Mammary epithelial cell (primary cell): ENCODE measurements at regions of chr2 and their contacts with region 1.

Region 1: DNA sequence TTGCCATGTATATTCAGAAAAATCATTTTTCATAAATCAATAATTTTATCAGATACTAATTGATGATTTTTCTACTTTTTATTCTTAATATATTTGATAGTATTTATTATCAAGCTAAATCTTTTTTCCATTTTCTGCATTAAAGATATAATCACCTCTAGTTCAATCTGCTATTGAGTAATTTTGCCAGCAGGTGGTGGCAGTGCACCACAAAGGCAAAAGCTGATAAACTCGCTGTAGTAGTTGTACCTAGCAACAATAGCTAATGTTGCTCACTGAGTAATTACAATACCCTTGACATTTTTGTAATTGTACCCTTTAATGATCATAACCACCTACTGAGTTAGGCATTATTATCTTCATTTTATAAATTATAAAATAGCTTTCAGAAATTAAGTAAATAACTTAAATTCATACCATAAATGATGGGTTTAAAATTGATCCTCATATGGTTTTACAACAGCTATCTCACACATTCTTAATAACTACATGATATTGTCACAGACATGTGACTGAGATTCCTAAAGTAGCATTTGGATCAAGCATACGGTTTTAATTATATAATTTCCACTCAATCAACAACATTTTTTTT is 52.0 kb upstream of the CALCRL start:
- DNase-seq: peak; percentile 28
- H3K4me3 ChIP-seq: no peak overlapping the region
- H3K27ac ChIP-seq: no peak overlapping the region
- H3K4me1 ChIP-seq: no peaks in the 10 kb centered on the region
- H3K27me3 ChIP-seq: no peaks in the 10 kb centered on the region
- CTCF ChIP-seq: peak; percentile 74 to 82

Region 2: DNA sequence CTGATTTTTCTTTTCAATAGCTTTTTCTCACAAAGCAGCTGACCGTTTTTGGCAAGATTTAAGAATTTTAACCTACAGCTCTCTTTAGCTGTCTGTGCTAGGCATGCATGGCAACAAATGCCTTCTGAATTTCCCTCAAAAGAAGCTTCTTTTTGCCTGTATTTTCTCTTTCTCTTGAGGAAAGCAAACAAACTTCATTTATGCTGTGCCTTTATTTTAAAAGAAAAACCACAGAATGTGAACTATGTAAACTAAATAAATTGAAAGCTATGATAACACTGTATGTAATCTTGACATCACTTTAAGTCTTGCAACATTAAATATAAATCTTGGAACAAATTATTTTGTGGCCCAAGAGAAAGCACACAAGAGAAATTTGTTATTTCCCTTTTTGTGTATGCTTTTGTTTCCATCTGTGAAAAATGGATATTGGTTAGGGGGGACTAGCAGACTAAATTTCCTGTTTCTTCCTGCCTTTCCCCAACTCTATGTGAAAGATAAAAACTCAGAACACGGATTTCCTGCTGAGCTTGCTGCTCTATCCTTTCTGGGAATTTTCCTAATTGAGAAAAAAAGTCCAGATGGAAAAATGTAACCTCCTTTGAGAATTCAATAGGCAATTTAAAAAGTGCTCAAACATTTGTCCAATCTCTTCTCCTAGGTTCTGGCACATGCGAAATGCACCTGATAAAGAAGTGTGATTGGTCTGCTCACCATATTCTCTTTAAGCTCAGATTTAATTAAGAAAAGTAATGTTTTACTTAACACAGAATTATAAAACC is 75.1 kb after region 1 on chr2:
- CTCF ChIA-PET with region 1: interaction called, 3 read pairs
- dilution Hi-C with region 1: no loop called
- in situ Hi-C with region 1: loop called (anchors 5 kb)
- intact Hi-C with region 1: loop called (anchors 1 kb)
- DNase-seq: no peak
- H3K4me3 ChIP-seq: no peak overlapping the region
- H3K27ac ChIP-seq: no peak overlapping the region
- H3K4me1 ChIP-seq: no peaks in the 10 kb centered on the region
- H3K27me3 ChIP-seq: no peaks in the 10 kb centered on the region
- CTCF ChIP-seq: no peak

Region 3: GRCh38 chr2:187658952-187659525 is 159.0 kb after region 1 on chr2:
- CTCF ChIA-PET with region 1: no interaction called
- dilution Hi-C with region 1: no loop called
- in situ Hi-C with region 1: no loop called
- intact Hi-C with region 1: loop called (anchors 10 kb)
- DNase-seq: peak; percentile 4
- H3K4me3 ChIP-seq: no peak overlapping the region
- H3K27ac ChIP-seq: no peak overlapping the region
- H3K4me1 ChIP-seq: no peaks in the 10 kb centered on the region
- H3K27me3 ChIP-seq: no peaks in the 10 kb centered on the region
- CTCF ChIP-seq: peak; percentile 19 to 57

Region 4: GRCh38 chr2:187842978-187843847 is 343.2 kb after region 1 on chr2:
- CTCF ChIA-PET with region 1: no interaction called
- dilution Hi-C with region 1: no loop called
- in situ Hi-C with region 1: loop called in 1 of 2 experiments (anchors 25 kb)
- intact Hi-C with region 1: loop called (anchors 2 kb)
- DNase-seq: peak; percentile 35
- H3K4me3 ChIP-seq: no peak overlapping the region
- H3K27ac ChIP-seq: no peak overlapping the region
- H3K4me1 ChIP-seq: no peaks in the 10 kb centered on the region
- H3K27me3 ChIP-seq: no peaks in the 10 kb centered on the region
- CTCF ChIP-seq: peak; percentile 46 to 67

Region 5: GRCh38 chr2:188506843-188507242 is 1006.8 kb after region 1 on chr2:
- CTCF ChIA-PET with region 1: no interaction called
- dilution Hi-C with region 1: no loop called
- in situ Hi-C with region 1: loop called in 1 of 2 experiments (anchors 25 kb)
- intact Hi-C with region 1: loop called (anchors 5 kb)
- DNase-seq: no peak
- H3K4me3 ChIP-seq: no peak overlapping the region
- H3K27ac ChIP-seq: no peak overlapping the region
- H3K4me1 ChIP-seq: no peaks in the 10 kb centered on the region
- H3K27me3 ChIP-seq: no peaks in the 10 kb centered on the region
- CTCF ChIP-seq: no peak